Esophagus squamous epithelium (tissue), 5 donors: ENCODE measurements at regions of chr1 and their contacts with region 1.

Region 1: GRCh38 chr1:178962853-178963711 is 62.6 kb upstream of the FAM20B start:
- DNase-seq: no peak
- H3K4me3 ChIP-seq: no peak overlapping the region
- H3K27ac ChIP-seq: no peak overlapping the region
- H3K4me1 ChIP-seq: peaks cover 0 to 6% (median 0%) of the 10 kb centered on the region in 3 donors
- H3K27me3 ChIP-seq: no peaks in the 10 kb centered on the region
- CTCF ChIP-seq: no peak
- POLR2A ChIP-seq: no peak

Region 2: DNA sequence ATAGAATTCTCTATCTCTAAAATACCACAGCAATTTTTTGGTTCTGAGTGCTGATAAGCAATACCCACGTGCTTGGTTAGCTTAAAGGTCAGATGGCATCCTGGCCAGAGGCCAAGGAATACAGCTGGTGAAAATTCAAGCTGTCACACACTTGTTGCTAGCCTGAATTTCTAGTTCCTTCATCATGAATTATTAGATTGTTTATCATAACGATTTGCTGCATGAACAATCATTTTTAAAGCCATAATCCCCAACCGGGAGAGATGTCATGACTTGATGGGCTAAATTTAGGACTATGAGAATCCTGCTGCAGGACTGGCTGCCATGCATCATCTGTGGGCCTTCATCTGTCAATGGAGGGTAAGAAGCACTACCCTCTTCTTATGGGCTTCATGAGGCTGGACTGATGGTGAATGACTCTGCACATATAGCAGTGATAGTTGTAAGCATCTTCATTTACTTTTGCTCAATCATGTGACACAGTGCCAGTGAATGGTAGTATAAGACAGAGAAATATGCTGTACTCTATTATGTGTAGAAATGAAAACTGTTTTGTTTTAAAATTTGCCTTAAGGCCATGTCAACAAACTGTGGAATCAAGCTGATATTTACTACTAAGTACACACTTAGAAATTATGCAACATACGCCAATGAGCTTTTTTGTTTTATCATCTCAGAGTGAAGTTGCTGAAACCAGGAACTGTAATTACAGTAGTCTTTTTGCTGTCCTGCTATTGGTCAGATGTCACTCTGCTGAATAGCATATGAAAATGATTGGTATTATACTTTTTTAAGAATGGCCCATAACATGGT is 318.6 kb before region 1 on chr1:
- intact Hi-C with region 1: no loop called
- DNase-seq: no peak
- H3K4me3 ChIP-seq: no peak overlapping the region
- H3K27ac ChIP-seq: no peak overlapping the region
- H3K4me1 ChIP-seq: peaks cover 0 to 34% (median 6%) of the 10 kb centered on the region in 3 donors
- H3K27me3 ChIP-seq: no peaks in the 10 kb centered on the region
- CTCF ChIP-seq: no peak
- POLR2A ChIP-seq: no peak

Region 3: DNA sequence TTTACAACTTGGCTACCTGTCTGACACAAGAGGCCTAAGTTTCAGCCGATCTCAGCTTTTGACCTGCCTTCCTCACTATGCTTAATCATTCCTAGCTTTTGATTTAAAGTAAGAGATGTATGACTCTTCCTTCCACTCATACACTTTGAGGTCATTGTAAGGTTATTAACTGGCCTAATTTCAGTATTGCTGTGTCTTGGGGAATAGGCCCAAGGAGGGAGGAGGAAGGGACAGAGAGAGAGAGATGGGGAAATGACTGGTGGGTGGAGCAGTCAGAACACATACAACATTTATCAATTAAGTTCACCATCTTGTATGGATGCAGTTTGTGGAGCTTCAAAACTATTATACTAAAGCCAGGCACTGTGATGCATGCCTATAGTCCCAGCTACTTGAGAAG is 34.3 kb after region 1 on chr1:
- intact Hi-C with region 1: loop called (anchors 5 kb)
- DNase-seq: no peak
- H3K4me3 ChIP-seq: no peak overlapping the region
- H3K27ac ChIP-seq: no peak overlapping the region
- H3K4me1 ChIP-seq: peaks cover 0 to 2% (median 2%) of the 10 kb centered on the region in 3 donors
- H3K27me3 ChIP-seq: no peaks in the 10 kb centered on the region
- CTCF ChIP-seq: no peak
- POLR2A ChIP-seq: no peak

Region 4: GRCh38 chr1:179091691-179092165 is 128.6 kb after region 1 on chr1:
- intact Hi-C with region 1: no loop called
- DNase-seq: no peak
- H3K4me3 ChIP-seq: no peak overlapping the region
- H3K27ac ChIP-seq: peak overlapping the region in 2 of 4 donors; percentile 48 to 69
- H3K4me1 ChIP-seq: peaks cover 0 to 41% (median 13%) of the 10 kb centered on the region in 3 donors
- H3K27me3 ChIP-seq: no peaks in the 10 kb centered on the region
- CTCF ChIP-seq: no peak
- POLR2A ChIP-seq: no peak